ENCODE measurements at regions of chr7 and their contacts with region 1.

Region 1: GRCh38 chr7:140673063-140673773 is 473 bp downstream of the ADCK2 start:
- DNase-seq: peak; percentile 89
- H3K4me3 ChIP-seq: peak overlapping the region; percentile 64 to 74
- H3K27ac ChIP-seq: 0 out of 4 replicates have a peak overlapping the region, but pooled peaks of 1 of the 2 experiments have one; percentile 18
- H3K4me1 ChIP-seq: peaks cover 7 to 20% of the 10 kb centered on the region in 2 experiments; a peak in 2 of 4 replicates
- H3K27me3 ChIP-seq: no peaks in the 10 kb centered on the region
- CTCF ChIP-seq: no peak
- EP300 ChIP-seq: no peak
- RAD21 ChIP-seq: no peak

Region 2: GRCh38 chr7:140304191-140304799 is 368.9 kb before region 1 on chr7:
- CTCF ChIA-PET with region 1: no interaction called
- POLR2A ChIA-PET with region 1: no interaction called
- DNase-seq: peak; percentile 46
- H3K4me3 ChIP-seq: no peak overlapping the region
- H3K27ac ChIP-seq: no peak overlapping the region
- H3K4me1 ChIP-seq: no peaks in the 10 kb centered on the region
- H3K27me3 ChIP-seq: 0 out of 2 replicates have a peak, but pooled peaks cover 8% of the 10 kb centered on the region
- CTCF ChIP-seq: 0 out of 2 replicates have a peak, but pooled peaks have one; percentile 22
- EP300 ChIP-seq: no peak
- RAD21 ChIP-seq: peak; percentile 58

Region 3: DNA sequence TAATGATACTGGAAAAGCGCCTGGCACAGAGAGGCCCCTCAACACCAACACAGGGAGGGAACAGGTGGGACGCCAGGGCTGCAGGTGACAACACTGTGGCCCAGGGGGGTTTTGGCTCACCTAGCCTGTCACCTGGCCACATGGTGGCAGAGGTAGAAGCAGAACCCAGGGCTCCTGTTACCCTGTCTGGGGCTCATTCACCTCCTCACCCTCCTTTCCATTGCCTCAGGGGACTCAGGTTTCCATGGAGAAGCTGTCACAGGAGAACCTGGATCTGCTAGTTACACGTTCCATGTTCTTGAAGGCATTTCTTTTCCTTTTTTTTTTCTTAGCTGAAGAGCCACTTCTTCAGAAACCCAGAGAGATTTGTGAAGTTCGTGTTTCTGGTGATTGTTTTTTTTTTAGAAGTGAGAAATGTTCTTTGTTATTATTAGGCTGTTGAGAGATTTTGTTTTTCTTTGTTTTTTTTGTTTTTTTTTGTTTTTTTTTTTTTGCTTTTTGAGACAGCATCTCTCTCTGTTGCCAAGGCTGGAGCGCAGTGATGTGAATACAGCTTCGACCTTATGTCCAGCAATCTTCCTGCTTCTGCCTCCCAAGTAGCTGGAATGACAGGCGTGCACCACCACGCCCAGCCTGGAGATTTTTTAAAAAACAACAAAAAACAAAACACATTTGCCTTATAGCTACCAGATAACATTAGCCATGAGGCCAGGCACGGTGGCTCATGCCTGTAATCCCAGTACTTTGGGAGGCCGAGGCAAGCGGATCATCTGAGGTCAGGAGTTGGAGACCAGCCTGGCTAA is 48.6 kb before region 1 on chr7:
- CTCF ChIA-PET with region 1: no interaction called
- POLR2A ChIA-PET with region 1: no interaction called
- DNase-seq: no peak
- H3K4me3 ChIP-seq: no peak overlapping the region
- H3K27ac ChIP-seq: no peak overlapping the region
- H3K4me1 ChIP-seq: peaks cover 4 to 15% of the 10 kb centered on the region in 2 experiments; a peak in 2 of 4 replicates
- H3K27me3 ChIP-seq: no peaks in the 10 kb centered on the region
- CTCF ChIP-seq: no peak
- EP300 ChIP-seq: no peak
- RAD21 ChIP-seq: no peak

Region 4: GRCh38 chr7:140661121-140661520 is 12.1 kb before region 1 on chr7:
- CTCF ChIA-PET with region 1: interaction called, 13 read pairs
- POLR2A ChIA-PET with region 1: no interaction called
- DNase-seq: no peak
- H3K4me3 ChIP-seq: no peak overlapping the region
- H3K27ac ChIP-seq: no peak overlapping the region
- H3K4me1 ChIP-seq: no peaks in the 10 kb centered on the region
- H3K27me3 ChIP-seq: peaks cover 9% of the 10 kb centered on the region; the same call in 1 of the 2 replicates
- CTCF ChIP-seq: peak; percentile 47
- EP300 ChIP-seq: no peak
- RAD21 ChIP-seq: peak; percentile 68

Region 5: GRCh38 chr7:141369422-141369821 is 696.2 kb after region 1 on chr7:
- CTCF ChIA-PET with region 1: no interaction called
- POLR2A ChIA-PET with region 1: no interaction called
- DNase-seq: no peak
- H3K4me3 ChIP-seq: no peak overlapping the region
- H3K27ac ChIP-seq: no peak overlapping the region
- H3K4me1 ChIP-seq: peaks cover 0 to 8% of the 10 kb centered on the region in 2 experiments; a peak in 1 of 4 replicates
- H3K27me3 ChIP-seq: no peaks in the 10 kb centered on the region
- CTCF ChIP-seq: no peak
- EP300 ChIP-seq: no peak
- RAD21 ChIP-seq: no peak

Region 6: DNA sequence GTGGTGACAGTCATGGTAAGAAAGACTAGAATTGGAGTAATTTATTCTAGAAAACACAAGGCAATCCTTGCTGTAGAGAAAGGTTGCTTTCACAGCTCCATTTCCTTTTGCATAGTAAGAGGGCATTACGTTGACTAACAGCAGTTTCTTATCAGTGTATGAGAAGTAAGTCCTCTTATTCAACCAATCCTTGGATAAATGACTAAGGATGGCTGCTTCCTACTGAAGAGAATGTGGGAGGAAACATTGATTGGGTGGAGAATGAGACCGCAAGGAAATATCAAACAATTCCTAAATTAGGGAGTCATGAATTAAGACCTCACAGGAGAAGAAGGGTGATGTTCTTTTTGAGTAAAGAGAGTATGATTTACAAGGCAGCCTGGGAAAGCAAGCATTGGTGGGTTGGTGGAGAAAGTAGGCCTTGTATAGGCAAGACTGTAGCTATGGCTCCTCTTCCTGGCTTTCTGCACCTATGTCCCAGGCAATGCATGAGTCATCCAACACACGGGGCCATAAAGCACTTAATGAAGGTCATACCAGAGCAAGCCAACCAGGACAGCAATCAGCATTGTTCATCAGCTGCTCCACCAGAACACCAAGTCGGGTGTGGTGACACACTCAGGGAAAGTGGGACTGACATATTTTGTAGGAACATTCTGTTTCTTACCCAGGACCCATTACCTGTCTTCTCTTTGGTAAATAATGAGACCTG is 1328.1 kb after region 1 on chr7:
- CTCF ChIA-PET with region 1: no interaction called
- POLR2A ChIA-PET with region 1: no interaction called
- DNase-seq: no peak
- H3K4me3 ChIP-seq: no peak overlapping the region
- H3K27ac ChIP-seq: peak overlapping the region in 1 of 2 experiments; percentile 74; a peak in 2 of 4 replicates
- H3K4me1 ChIP-seq: peaks cover 0 to 17% of the 10 kb centered on the region in 2 experiments; a peak in 2 of 4 replicates
- H3K27me3 ChIP-seq: no peaks in the 10 kb centered on the region
- CTCF ChIP-seq: no peak
- EP300 ChIP-seq: no peak
- RAD21 ChIP-seq: no peak